Endothelial cell of umbilical vein (primary cell): ENCODE measurements at regions of chr9 and their contacts with region 1.

Region 1: GRCh38 chr9:35882263-35882848 is 12.2 kb upstream of the OR13J1 start:
- DNase-seq: peak; percentile 75
- H3K4me3 ChIP-seq: no peak overlapping the region
- H3K27ac ChIP-seq: no peak overlapping the region
- H3K4me1 ChIP-seq: peaks cover 5% of the 10 kb centered on the region
- H3K27me3 ChIP-seq: peaks cover 4 to 17% of the 10 kb centered on the region in 2 experiments
- CTCF ChIP-seq: peak; percentile 91 to 96
- POLR2A ChIP-seq: no peak

Region 2: DNA sequence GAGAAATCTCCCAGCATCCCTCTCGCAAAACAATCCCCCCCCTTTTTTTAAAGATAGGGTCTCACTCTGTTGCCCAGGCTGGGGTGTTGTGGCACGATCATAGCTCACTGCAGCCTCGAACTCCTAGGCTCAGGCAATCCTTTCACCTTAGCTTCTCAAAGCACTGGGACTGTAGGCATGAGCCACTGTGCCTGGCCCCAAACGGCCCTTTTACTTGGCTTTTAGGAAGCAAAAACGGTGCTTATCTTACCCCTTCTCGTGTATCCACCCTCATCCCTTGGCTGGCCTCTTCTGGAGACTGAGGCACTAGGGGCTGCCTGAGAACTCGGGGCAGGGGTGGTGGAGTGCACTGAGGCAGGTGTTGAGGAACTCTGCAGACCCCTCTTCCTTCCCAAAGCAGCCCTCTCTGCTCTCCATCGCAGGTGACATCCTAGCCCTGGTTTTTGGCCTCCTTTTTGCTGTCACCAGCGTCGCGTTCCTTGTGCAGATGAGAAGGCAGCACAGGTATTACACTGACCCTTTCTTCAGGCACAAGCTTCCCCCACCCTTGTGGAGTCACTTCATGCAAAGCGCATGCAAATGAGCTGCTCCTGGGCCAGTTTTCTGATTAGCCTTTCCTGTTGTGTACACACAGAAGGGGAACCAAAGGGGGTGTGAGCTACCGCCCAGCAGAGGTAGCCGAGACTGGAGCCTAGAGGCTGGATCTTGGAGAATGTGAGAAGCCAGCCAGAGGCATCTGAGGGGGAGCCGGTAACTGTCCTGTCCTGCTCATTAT is 201.8 kb before region 1 on chr9:
- CTCF ChIA-PET with region 1: no interaction called
- POLR2A ChIA-PET with region 1: no interaction called
- dilution Hi-C with region 1: no loop called
- intact Hi-C with region 1: no loop called
- DNase-seq: no peak
- H3K4me3 ChIP-seq: no peak overlapping the region
- H3K27ac ChIP-seq: no peak overlapping the region
- H3K4me1 ChIP-seq: peaks cover 5% of the 10 kb centered on the region
- H3K27me3 ChIP-seq: no peaks in the 10 kb centered on the region
- CTCF ChIP-seq: no peak
- POLR2A ChIP-seq: no peak

Region 3: DNA sequence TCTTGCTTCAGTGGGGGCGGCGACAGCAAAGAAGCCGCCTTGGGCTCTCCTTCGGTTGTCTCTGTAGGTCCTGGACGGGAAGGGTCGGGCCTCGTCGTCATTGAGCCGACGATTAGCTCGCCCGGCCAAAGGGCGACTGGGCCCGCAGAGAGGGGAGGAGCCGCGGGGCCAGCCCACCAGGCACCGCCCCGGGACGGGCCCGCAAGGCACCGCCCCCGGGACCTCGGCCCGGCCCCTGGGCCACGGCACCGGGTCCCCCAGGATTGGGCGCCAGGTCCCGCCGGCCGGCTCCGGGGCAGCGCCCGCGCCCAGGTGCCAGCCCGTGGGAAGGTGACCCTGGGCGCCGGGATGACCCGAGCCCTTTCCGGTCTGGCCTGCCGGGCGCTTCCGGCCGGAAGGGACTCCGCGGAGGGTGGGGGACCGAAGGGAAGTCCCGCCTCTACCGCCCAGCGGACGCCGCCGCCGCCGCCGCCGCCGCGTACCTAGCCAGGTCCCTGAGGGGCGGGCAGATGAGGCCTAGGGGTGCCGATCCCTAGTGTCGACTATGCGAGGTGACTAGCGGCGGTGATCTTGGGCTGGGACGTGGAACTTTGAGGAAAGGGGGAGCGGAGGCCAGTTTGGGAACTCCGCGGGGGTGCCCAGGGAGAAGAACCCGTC is 133.4 kb before region 1 on chr9 and contains the starts of genes GBA2 and RGP1:
- CTCF ChIA-PET with region 1: interaction called, 14 read pairs
- POLR2A ChIA-PET with region 1: no interaction called
- dilution Hi-C with region 1: no loop called
- intact Hi-C with region 1: no loop called
- DNase-seq: peak; percentile 75
- H3K4me3 ChIP-seq: peak within 1 kb of the TSS; percentile 66 to 99 (median 87)
- H3K27ac ChIP-seq: peak within 1 kb of the TSS; percentile 84
- H3K4me1 ChIP-seq: peaks cover 69% of the 10 kb centered on the region
- H3K27me3 ChIP-seq: no peaks in the 10 kb centered on the region
- CTCF ChIP-seq: no peak
- POLR2A ChIP-seq: peak; percentile 72
- total RNA-seq, gene GBA2: 158 and 196 TPM in 2 replicates
- total RNA-seq, gene RGP1: 23.3 and 29.0 TPM in 2 replicates

Region 4: DNA sequence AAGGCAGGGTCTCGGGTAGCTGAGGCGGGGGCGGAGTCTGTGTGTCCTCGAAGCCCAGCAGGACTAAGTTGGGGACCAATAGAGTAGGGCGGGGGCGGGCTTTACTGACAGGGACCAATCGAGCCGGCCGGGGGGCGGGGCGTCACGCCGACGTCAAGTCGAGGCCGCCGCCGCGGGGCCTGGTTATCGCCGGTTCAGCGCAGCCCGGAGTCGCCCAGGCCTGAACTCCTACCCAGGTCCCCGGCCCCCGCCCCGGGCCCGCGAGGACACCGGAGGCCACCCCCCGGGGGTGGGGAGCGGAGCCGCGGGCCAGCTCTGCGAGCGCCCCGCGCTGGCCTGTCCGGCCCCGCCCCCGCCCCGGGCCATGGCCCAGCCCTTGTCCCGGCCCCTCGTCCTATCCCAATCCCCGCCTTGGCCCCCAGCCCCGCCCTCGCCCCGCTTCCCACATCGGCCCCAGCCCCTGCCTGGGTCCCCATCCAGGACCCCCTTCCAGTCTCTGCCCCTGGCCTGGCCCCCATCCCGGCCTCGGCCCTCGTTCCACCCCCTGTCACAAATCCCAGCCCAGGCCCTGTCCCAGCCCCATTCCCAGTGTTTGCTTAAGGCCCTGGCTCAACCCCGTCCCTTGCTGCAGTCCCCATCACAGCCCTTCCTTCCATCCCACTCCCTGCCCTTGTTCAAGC is 53.1 kb before region 1 on chr9 and contains the start of gene TMEM8B:
- CTCF ChIA-PET with region 1: interaction called, 212 read pairs
- POLR2A ChIA-PET with region 1: no interaction called
- dilution Hi-C with region 1: no loop called
- intact Hi-C with region 1: loop called (anchors 1 kb)
- DNase-seq: peak; percentile 91
- H3K4me3 ChIP-seq: peak within 1 kb of the TSS; percentile 54 to 60 (median 60)
- H3K27ac ChIP-seq: peak within 1 kb of the TSS; percentile 34
- H3K4me1 ChIP-seq: peaks cover 9% of the 10 kb centered on the region
- H3K27me3 ChIP-seq: no peaks in the 10 kb centered on the region
- CTCF ChIP-seq: no peak
- POLR2A ChIP-seq: peak; percentile 57
- total RNA-seq, gene TMEM8B: 2.5 and 2.9 TPM in 2 replicates

Region 5: GRCh38 chr9:35844716-35845270 is 37.6 kb before region 1 on chr9:
- CTCF ChIA-PET with region 1: interaction called, 17 read pairs
- POLR2A ChIA-PET with region 1: no interaction called
- dilution Hi-C with region 1: no loop called
- intact Hi-C with region 1: no loop called
- DNase-seq: peak; percentile 83
- H3K4me3 ChIP-seq: no peak overlapping the region
- H3K27ac ChIP-seq: no peak overlapping the region
- H3K4me1 ChIP-seq: peaks cover 16% of the 10 kb centered on the region
- H3K27me3 ChIP-seq: peaks cover 0 to 11% of the 10 kb centered on the region in 2 experiments
- CTCF ChIP-seq: no peak
- POLR2A ChIP-seq: no peak

Region 6: GRCh38 chr9:35903049-35903448 is 20.7 kb after region 1 on chr9:
- CTCF ChIA-PET with region 1: interaction called, 18 read pairs
- POLR2A ChIA-PET with region 1: no interaction called
- dilution Hi-C with region 1: no loop called
- intact Hi-C with region 1: no loop called
- DNase-seq: peak; percentile 67
- H3K4me3 ChIP-seq: no peak overlapping the region
- H3K27ac ChIP-seq: no peak overlapping the region
- H3K4me1 ChIP-seq: peaks cover 35% of the 10 kb centered on the region
- H3K27me3 ChIP-seq: no peaks in the 10 kb centered on the region
- CTCF ChIP-seq: peak; percentile 48 to 62
- POLR2A ChIP-seq: no peak

Region 7: DNA sequence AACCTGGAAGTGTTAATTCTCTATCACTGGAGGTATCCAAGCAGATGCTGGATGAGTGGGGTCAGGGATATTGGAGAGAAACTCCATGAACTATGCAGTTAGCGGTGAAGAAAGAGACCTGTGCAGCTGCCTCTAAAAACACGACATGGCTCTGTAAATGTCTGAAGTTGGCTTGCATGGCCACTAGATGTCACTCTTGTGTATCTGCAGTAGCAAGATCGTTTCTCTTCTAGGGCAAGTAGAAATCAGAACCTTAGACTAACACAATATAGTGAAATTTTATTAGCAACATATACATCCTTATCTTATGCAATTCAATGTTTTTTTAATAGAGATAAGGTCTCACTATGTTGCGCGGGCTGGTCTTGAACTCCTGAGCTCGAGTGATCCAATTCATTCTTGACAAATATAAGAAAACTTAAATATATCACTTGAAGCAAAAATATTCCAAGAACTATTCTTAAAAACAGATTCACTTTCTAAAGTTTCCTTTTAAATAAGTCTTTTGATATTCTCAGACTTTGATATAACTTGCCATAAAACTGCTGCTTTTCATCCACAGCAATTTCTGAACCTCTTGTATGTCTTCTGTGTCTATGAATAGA is 72.7 kb after region 1 on chr9:
- CTCF ChIA-PET with region 1: interaction called, 11 read pairs
- POLR2A ChIA-PET with region 1: no interaction called
- dilution Hi-C with region 1: no loop called
- intact Hi-C with region 1: no loop called
- DNase-seq: peak; percentile 79
- H3K4me3 ChIP-seq: no peak overlapping the region
- H3K27ac ChIP-seq: no peak overlapping the region
- H3K4me1 ChIP-seq: peaks cover 19% of the 10 kb centered on the region
- H3K27me3 ChIP-seq: no peaks in the 10 kb centered on the region
- CTCF ChIP-seq: peak; percentile 71 to 75
- POLR2A ChIP-seq: no peak